GM12878 (cell line): ENCODE measurements at regions of chr5 and their contacts with region 1.

Region 1: DNA sequence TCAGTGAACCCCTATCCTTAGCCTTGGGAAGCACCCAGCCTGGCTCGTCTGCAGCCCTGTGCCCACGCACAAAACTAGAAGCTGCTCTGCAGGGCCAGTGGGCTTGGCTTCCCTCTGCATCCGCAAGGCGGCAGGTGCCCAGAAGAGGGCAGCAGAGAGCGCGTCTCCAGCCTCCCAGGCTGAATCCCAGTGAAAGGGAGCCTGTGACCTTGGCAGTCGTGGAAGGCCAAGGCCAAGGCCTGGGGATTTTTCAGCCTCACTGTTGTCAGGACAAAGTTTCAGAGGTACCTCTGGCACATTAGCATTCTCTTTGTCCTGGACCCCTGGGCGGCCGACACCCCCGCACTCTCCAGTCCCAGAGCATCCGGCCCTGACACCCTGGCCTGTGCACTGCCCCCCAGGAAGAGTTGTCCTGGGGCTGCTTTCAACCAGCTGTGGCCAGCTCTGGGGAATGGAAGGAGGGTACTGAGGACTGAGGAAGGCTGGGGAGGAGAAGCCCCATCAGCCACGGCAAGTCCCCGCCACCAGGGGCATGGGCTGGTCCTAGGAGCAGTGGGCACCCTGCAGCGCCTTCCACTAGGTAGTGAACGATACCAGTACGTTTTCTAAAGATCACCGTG is 63.6 kb upstream of the IL17B start:
- DNase-seq: no peak
- ATAC-seq: peak; percentile 95
- H3K4me3 ChIP-seq: no peak overlapping the region
- H3K27ac ChIP-seq: no peak overlapping the region
- H3K4me1 ChIP-seq: no peaks in the 10 kb centered on the region
- H3K27me3 ChIP-seq: no peaks in the 10 kb centered on the region; a peak in 1 of 4 replicates
- CTCF ChIP-seq: peak; percentile 85 to 96 (median 93)
- EP300 ChIP-seq: no peak
- POLR2A ChIP-seq: no peak
- RAD21 ChIP-seq: peak; percentile 75

Region 2: GRCh38 chr5:149381987-149382340 is 60.7 kb before region 1 on chr5:
- CTCF ChIA-PET with region 1: interaction called, 27 read pairs
- POLR2A ChIA-PET with region 1: no interaction called
- RAD21 ChIA-PET with region 1: interaction called, 3 read pairs
- SMC1A ChIA-PET with region 1: interaction called, 3 read pairs
- in situ Hi-C with region 1: no loop called
- intact Hi-C with region 1: no loop called
- DNase-seq: no peak
- ATAC-seq: peak; percentile 97
- H3K4me3 ChIP-seq: no peak overlapping the region
- H3K27ac ChIP-seq: no peak overlapping the region
- H3K4me1 ChIP-seq: no peaks in the 10 kb centered on the region
- H3K27me3 ChIP-seq: peaks cover 0 to 2% of the 10 kb centered on the region in 2 experiments; a peak in 2 of 4 replicates
- CTCF ChIP-seq: peak; percentile 83 to 90 (median 87)
- EP300 ChIP-seq: no peak
- POLR2A ChIP-seq: no peak
- RAD21 ChIP-seq: peak; percentile 69

Region 3: GRCh38 chr5:149427374-149427773 is 15.3 kb before region 1 on chr5:
- CTCF ChIA-PET with region 1: interaction called, 52 read pairs
- POLR2A ChIA-PET with region 1: no interaction called
- RAD21 ChIA-PET with region 1: interaction called, 10 read pairs
- SMC1A ChIA-PET with region 1: interaction called, 5 read pairs
- in situ Hi-C with region 1: no loop called
- intact Hi-C with region 1: no loop called
- DNase-seq: no peak
- ATAC-seq: no peak
- H3K4me3 ChIP-seq: no peak overlapping the region
- H3K27ac ChIP-seq: no peak overlapping the region
- H3K4me1 ChIP-seq: 0 out of 2 replicates have a peak, but pooled peaks cover 2% of the 10 kb centered on the region
- H3K27me3 ChIP-seq: no peaks in the 10 kb centered on the region
- CTCF ChIP-seq: no peak
- EP300 ChIP-seq: no peak
- POLR2A ChIP-seq: no peak
- RAD21 ChIP-seq: no peak

Region 4: GRCh38 chr5:149551200-149552037 is 108.7 kb after region 1 on chr5 and contains the start of gene CSNK1A1:
- CTCF ChIA-PET with region 1: interaction called, 12 read pairs
- POLR2A ChIA-PET with region 1: no interaction called
- RAD21 ChIA-PET with region 1: interaction called, 5 read pairs
- SMC1A ChIA-PET with region 1: interaction called, 7 read pairs
- in situ Hi-C with region 1: no loop called
- intact Hi-C with region 1: no loop called
- DNase-seq: peak; percentile 98
- ATAC-seq: peak; percentile 91
- H3K4me3 ChIP-seq: peak within 1 kb of the TSS; percentile 82
- H3K27ac ChIP-seq: peak within 1 kb of the TSS; percentile 100
- H3K4me1 ChIP-seq: no peaks in the 10 kb centered on the region; the same call in 1 of the 2 replicates
- H3K27me3 ChIP-seq: no peaks in the 10 kb centered on the region
- CTCF ChIP-seq: peak; percentile 58 to 77 (median 69)
- EP300 ChIP-seq: 0 out of 4 replicates have a peak, but pooled peaks of 1 of the 2 experiments have one; percentile 23
- POLR2A ChIP-seq: peak; percentile 94
- RAD21 ChIP-seq: peak; percentile 51
- polyA plus RNA-seq, gene CSNK1A1: 53.3 to 62.0 TPM

Region 5: GRCh38 chr5:149561848-149562247 is 119.2 kb after region 1 on chr5:
- CTCF ChIA-PET with region 1: interaction called, 68 read pairs
- POLR2A ChIA-PET with region 1: interaction called, 3 read pairs
- RAD21 ChIA-PET with region 1: interaction called, 9 read pairs
- SMC1A ChIA-PET with region 1: interaction called, 27 read pairs
- in situ Hi-C with region 1: loop called (anchors 5 kb)
- intact Hi-C with region 1: loop called (anchors 1 kb)
- DNase-seq: no peak
- ATAC-seq: no peak
- H3K4me3 ChIP-seq: no peak overlapping the region
- H3K27ac ChIP-seq: no peak overlapping the region
- H3K4me1 ChIP-seq: no peaks in the 10 kb centered on the region
- H3K27me3 ChIP-seq: no peaks in the 10 kb centered on the region
- CTCF ChIP-seq: no peak
- EP300 ChIP-seq: no peak
- POLR2A ChIP-seq: no peak
- RAD21 ChIP-seq: no peak

Region 6: DNA sequence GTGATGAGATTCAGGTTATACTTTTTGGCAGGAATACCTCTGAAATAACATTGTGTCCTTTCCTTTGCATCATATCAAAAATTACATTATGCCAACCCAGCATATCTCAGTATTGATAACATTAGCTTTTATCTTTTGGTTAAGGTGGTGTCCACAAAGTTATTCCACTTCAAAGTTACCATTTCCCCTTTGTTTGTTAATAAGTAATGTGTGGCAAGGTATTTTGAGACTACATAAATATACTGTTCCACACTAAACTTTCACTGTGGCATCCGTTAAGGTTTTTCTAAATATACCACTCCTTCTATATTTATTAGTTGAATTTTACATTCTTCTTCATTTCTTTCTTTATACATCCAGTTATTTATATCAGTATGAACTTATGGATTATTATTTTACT is 124.6 kb after region 1 on chr5:
- CTCF ChIA-PET with region 1: interaction called, 68 read pairs
- POLR2A ChIA-PET with region 1: no interaction called
- RAD21 ChIA-PET with region 1: interaction called, 9 read pairs
- SMC1A ChIA-PET with region 1: interaction called, 27 read pairs
- in situ Hi-C with region 1: loop called (anchors 5 kb)
- intact Hi-C with region 1: loop called (anchors 1 kb)
- DNase-seq: no peak
- ATAC-seq: peak; percentile 45
- H3K4me3 ChIP-seq: no peak overlapping the region
- H3K27ac ChIP-seq: no peak overlapping the region
- H3K4me1 ChIP-seq: no peaks in the 10 kb centered on the region
- H3K27me3 ChIP-seq: no peaks in the 10 kb centered on the region
- CTCF ChIP-seq: no peak
- EP300 ChIP-seq: no peak
- POLR2A ChIP-seq: no peak
- RAD21 ChIP-seq: no peak